CD4-positive, alpha-beta memory T cell (primary cell): ENCODE measurements at regions of chr6 and their contacts with region 1.

Region 1: DNA sequence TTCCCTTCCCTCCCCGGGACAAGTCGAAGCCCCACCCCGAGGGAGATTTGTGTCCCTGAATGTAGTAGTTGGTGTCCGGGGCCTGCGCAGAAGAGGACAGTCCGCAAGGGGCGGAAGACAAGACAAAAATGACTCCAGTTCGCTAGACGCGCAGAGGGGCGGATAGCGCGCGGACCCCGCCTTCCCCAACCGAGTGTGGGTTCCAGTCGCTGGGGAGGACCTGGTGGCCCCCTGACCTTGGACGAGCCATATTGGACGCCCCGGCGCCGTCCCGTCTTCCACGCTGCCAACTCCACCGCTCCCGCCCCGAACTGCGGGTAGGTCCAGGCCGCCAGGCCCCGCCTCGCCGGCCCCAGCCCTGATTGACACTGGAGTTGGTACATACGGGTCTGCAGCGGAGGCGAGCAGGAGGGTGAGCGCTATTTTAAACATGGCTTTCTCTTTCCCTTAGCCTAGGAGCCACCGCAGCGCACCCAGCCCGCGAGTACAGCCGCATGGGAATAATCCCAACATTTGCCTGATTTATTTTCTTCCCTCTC is 802 bp downstream of the HMGN3 start:
- DNase-seq: peak; percentile 58 to 71 (median 64)
- H3K4me3 ChIP-seq: peak overlapping the region; percentile 77 to 99
- H3K4me3 Mint-ChIP-seq: peak overlapping the region; percentile 92 to 99 (median 98)
- H3K27ac ChIP-seq: peak overlapping the region; percentile 72
- H3K27ac Mint-ChIP-seq: peak overlapping the region; percentile 85 to 96 (median 92)
- H3K4me1 ChIP-seq: peaks cover 20% of the 10 kb centered on the region
- H3K4me1 Mint-ChIP-seq: peaks cover 14 to 30% (median 16%) of the 10 kb centered on the region in 4 donors
- H3K27me3 ChIP-seq: no peaks in the 10 kb centered on the region
- H3K27me3 Mint-ChIP-seq: no peaks in the 10 kb centered on the region

Region 2: GRCh38 chr6:78670802-78671201 is 562.9 kb before region 1 on chr6:
- CTCF ChIA-PET with region 1: no interaction called
- POLR2A ChIA-PET with region 1: no interaction called
- intact Hi-C with region 1: no loop called
- DNase-seq: no peak
- H3K4me3 ChIP-seq: no peak overlapping the region
- H3K4me3 Mint-ChIP-seq: no peak overlapping the region
- H3K27ac ChIP-seq: no peak overlapping the region
- H3K27ac Mint-ChIP-seq: no peak overlapping the region
- H3K4me1 ChIP-seq: no peaks in the 10 kb centered on the region
- H3K4me1 Mint-ChIP-seq: no peaks in the 10 kb centered on the region
- H3K27me3 ChIP-seq: no peaks in the 10 kb centered on the region
- H3K27me3 Mint-ChIP-seq: no peaks in the 10 kb centered on the region

Region 3: DNA sequence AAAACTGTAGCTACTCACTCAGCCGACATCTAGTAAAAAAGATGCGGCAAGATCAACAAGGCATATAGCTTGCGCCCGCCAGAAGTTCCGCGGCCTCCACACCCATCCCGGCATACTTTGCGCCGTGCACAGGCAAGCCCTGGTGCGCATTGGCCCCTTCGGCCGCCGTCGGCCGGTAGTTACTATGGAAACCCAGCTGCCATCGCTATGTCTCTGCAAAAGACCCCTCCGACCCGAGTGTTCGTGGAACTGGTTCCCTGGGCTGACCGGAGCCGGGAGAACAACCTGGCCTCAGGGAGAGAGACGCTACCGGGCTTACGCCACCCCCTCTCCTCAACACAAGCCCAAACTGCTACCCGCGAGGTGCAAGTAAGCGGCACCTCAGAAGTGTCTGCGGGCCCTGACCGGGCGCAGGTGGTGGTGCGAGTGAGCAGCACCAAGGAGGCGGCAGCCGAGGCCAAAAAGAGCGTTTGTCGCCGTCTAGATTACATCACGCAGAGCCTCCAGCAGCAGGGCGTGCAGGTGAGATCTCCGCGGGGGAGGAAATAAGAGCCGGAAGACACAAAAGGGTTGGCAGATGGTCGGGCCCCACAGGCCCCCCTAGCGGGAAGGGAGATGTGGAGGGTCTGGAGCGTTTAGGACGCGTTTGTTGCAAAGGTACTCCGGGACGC is 366.2 kb before region 1 on chr6 and contains the start of gene IRAK1BP1:
- CTCF ChIA-PET with region 1: no interaction called
- POLR2A ChIA-PET with region 1: interaction called, 3 read pairs
- intact Hi-C with region 1: loop called (anchors 1 kb)
- DNase-seq: peak; percentile 71 to 79 (median 78)
- H3K4me3 ChIP-seq: peak within 1 kb of the TSS; percentile 84 to 99
- H3K4me3 Mint-ChIP-seq: peak within 1 kb of the TSS; percentile 94 to 99 (median 98)
- H3K27ac ChIP-seq: peak within 1 kb of the TSS; percentile 47
- H3K27ac Mint-ChIP-seq: peak within 1 kb of the TSS; percentile 78 to 98 (median 96)
- H3K4me1 ChIP-seq: peaks cover 13% of the 10 kb centered on the region
- H3K4me1 Mint-ChIP-seq: peaks cover 2 to 30% (median 17%) of the 10 kb centered on the region in 4 donors
- H3K27me3 ChIP-seq: no peaks in the 10 kb centered on the region
- H3K27me3 Mint-ChIP-seq: no peaks in the 10 kb centered on the region
- total RNA-seq, gene IRAK1BP1: 3.1 to 3.2 TPM

Region 4: GRCh38 chr6:79246891-79247290 is 13.2 kb after region 1 on chr6:
- CTCF ChIA-PET with region 1: no interaction called
- POLR2A ChIA-PET with region 1: no interaction called
- intact Hi-C with region 1: no loop called
- DNase-seq: no peak
- H3K4me3 ChIP-seq: no peak overlapping the region
- H3K4me3 Mint-ChIP-seq: no peak overlapping the region
- H3K27ac ChIP-seq: no peak overlapping the region
- H3K27ac Mint-ChIP-seq: no peak overlapping the region
- H3K4me1 ChIP-seq: no peaks in the 10 kb centered on the region
- H3K4me1 Mint-ChIP-seq: no peaks in the 10 kb centered on the region
- H3K27me3 ChIP-seq: no peaks in the 10 kb centered on the region
- H3K27me3 Mint-ChIP-seq: peaks cover 0 to 4% of the 10 kb centered on the region in 2 donors

Region 5: GRCh38 chr6:79536954-79537747 is 303.5 kb after region 1 on chr6 and contains the start of gene LCA5:
- CTCF ChIA-PET with region 1: no interaction called
- POLR2A ChIA-PET with region 1: no interaction called
- intact Hi-C with region 1: loop called (anchors 2 kb)
- DNase-seq: peak; percentile 73 to 85 (median 84)
- H3K4me3 ChIP-seq: peak within 1 kb of the TSS; percentile 25 to 44
- H3K4me3 Mint-ChIP-seq: no peak within 1 kb of the TSS
- H3K27ac ChIP-seq: no peak within 1 kb of the TSS
- H3K27ac Mint-ChIP-seq: no peak within 1 kb of the TSS
- H3K4me1 ChIP-seq: peaks cover 14% of the 10 kb centered on the region
- H3K4me1 Mint-ChIP-seq: peaks cover 0 to 4% (median under 1%) of the 10 kb centered on the region in 4 donors
- H3K27me3 ChIP-seq: no peaks in the 10 kb centered on the region
- H3K27me3 Mint-ChIP-seq: peaks cover 11 to 18% of the 10 kb centered on the region in 2 donors
- total RNA-seq, gene LCA5: 0.22 to 0.23 TPM

Region 6: DNA sequence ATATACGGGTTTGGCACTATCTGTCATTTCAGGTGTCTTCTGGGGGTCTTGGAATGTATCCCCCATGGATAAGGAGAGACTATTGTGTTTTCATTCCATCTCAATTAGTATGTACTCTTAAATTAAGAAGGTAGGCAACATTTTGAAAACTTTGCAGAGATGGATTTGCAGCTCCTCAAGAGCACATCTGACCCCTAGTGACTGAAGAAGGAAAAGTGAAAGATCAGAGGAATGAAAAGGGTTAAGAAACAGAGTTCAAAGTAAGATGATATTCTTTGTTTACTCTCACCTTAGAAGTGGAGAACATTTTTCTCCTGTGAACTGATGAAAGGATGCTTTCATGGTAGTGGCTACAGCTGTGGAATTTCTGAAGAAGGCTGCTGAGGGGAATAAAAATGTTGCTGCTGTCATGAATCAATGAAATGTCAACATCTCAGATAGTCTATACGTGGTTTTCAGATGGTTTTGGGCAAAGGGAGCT is 439.0 kb after region 1 on chr6:
- CTCF ChIA-PET with region 1: no interaction called
- POLR2A ChIA-PET with region 1: no interaction called
- intact Hi-C with region 1: loop called (anchors 10 kb)
- DNase-seq: no peak
- H3K4me3 ChIP-seq: no peak overlapping the region
- H3K4me3 Mint-ChIP-seq: no peak overlapping the region
- H3K27ac ChIP-seq: no peak overlapping the region
- H3K27ac Mint-ChIP-seq: peak overlapping the region in 2 of 7 donors; percentile 6 to 11
- H3K4me1 ChIP-seq: peaks cover 25% of the 10 kb centered on the region
- H3K4me1 Mint-ChIP-seq: peaks cover 12 to 27% (median 18%) of the 10 kb centered on the region in 4 donors
- H3K27me3 ChIP-seq: no peaks in the 10 kb centered on the region
- H3K27me3 Mint-ChIP-seq: no peaks in the 10 kb centered on the region

Region 7: GRCh38 chr6:80106418-80107235 is 872.9 kb after region 1 on chr6 and contains the start of gene BCKDHB:
- CTCF ChIA-PET with region 1: no interaction called
- POLR2A ChIA-PET with region 1: no interaction called
- intact Hi-C with region 1: loop called (anchors 5 kb)
- DNase-seq: peak; percentile 98 to 99 (median 98)
- H3K4me3 ChIP-seq: peak within 1 kb of the TSS; percentile 52 to 54
- H3K4me3 Mint-ChIP-seq: peak within 1 kb of the TSS; percentile 87 to 95 (median 92)
- H3K27ac ChIP-seq: peak within 1 kb of the TSS; percentile 50
- H3K27ac Mint-ChIP-seq: peak within 1 kb of the TSS; percentile 76 to 95 (median 92)
- H3K4me1 ChIP-seq: peaks cover 16% of the 10 kb centered on the region
- H3K4me1 Mint-ChIP-seq: peaks cover 12 to 22% (median 18%) of the 10 kb centered on the region in 4 donors
- H3K27me3 ChIP-seq: no peaks in the 10 kb centered on the region
- H3K27me3 Mint-ChIP-seq: peaks cover 1 to 3% of the 10 kb centered on the region in 2 donors
- total RNA-seq, gene BCKDHB: 11.8 to 16.0 TPM